PC-9 (cell line): ENCODE measurements at regions of chr2 and their contacts with region 1.

Region 1: GRCh38 chr2:98412751-98413458 is 31.8 kb upstream of the INPP4A start:
- DNase-seq: peak; percentile 50 to 69
- H3K4me3 ChIP-seq: no peak overlapping the region
- H3K27ac ChIP-seq: no peak overlapping the region
- H3K4me1 ChIP-seq: no peaks in the 10 kb centered on the region
- H3K27me3 ChIP-seq: no peaks in the 10 kb centered on the region
- CTCF ChIP-seq: peak; percentile 92

Region 2: GRCh38 chr2:98390571-98391465 is 22.1 kb before region 1 on chr2:
- CTCF ChIA-PET with region 1: no interaction called
- POLR2A ChIA-PET with region 1: no interaction called
- intact Hi-C with region 1: loop called (anchors 1 kb)
- DNase-seq: no peak
- H3K4me3 ChIP-seq: no peak overlapping the region
- H3K27ac ChIP-seq: no peak overlapping the region
- H3K4me1 ChIP-seq: no peaks in the 10 kb centered on the region
- H3K27me3 ChIP-seq: peaks cover 28% of the 10 kb centered on the region
- CTCF ChIP-seq: no peak

Region 3: GRCh38 chr2:98560256-98560771 is 147.4 kb after region 1 on chr2:
- CTCF ChIA-PET with region 1: no interaction called
- POLR2A ChIA-PET with region 1: no interaction called
- intact Hi-C with region 1: loop called (anchors 2 kb)
- DNase-seq: peak in 1 of 2 experiments; percentile 58
- H3K4me3 ChIP-seq: no peak overlapping the region
- H3K27ac ChIP-seq: no peak overlapping the region
- H3K4me1 ChIP-seq: no peaks in the 10 kb centered on the region
- H3K27me3 ChIP-seq: no peaks in the 10 kb centered on the region
- CTCF ChIP-seq: no peak

Region 4: GRCh38 chr2:98568881-98569793 is 156.2 kb after region 1 on chr2:
- CTCF ChIA-PET with region 1: no interaction called
- POLR2A ChIA-PET with region 1: no interaction called
- intact Hi-C with region 1: loop called (anchors 2 kb)
- DNase-seq: peak in 1 of 2 experiments; percentile 43
- H3K4me3 ChIP-seq: no peak overlapping the region
- H3K27ac ChIP-seq: no peak overlapping the region
- H3K4me1 ChIP-seq: no peaks in the 10 kb centered on the region
- H3K27me3 ChIP-seq: no peaks in the 10 kb centered on the region
- CTCF ChIP-seq: peak; percentile 97

Region 5: GRCh38 chr2:98601532-98602132 is 188.7 kb after region 1 on chr2:
- CTCF ChIA-PET with region 1: interaction called, 4 read pairs
- POLR2A ChIA-PET with region 1: no interaction called
- intact Hi-C with region 1: loop called (anchors 2 kb)
- DNase-seq: peak in 1 of 2 experiments; percentile 41
- H3K4me3 ChIP-seq: no peak overlapping the region
- H3K27ac ChIP-seq: no peak overlapping the region
- H3K4me1 ChIP-seq: peaks cover 19% of the 10 kb centered on the region
- H3K27me3 ChIP-seq: no peaks in the 10 kb centered on the region
- CTCF ChIP-seq: peak; percentile 89

Region 6: DNA sequence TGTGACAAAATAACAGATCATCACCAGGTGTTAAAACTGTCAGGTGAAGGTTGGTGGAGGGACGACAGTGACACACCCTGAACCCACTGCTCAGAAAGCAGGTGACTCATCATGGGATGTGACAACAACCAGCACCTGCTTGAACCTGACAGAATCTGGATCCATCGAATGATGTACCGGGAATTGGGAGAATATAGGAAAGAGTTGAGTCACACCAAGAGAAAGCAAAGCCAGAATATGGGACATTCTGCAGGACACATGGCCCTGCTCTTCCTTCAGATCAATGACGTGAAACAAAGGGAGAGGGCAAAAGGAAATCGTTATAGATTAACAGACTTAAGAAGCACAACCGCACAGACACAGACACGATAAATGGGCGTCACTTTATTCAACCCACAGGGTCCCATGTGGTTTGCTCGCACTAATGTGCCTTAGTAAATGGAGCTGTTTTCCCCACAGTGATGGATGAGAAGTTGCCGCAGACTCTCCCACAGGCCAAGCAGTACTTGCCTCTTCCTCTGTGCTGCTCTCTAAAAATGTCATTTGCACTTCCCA is 423.0 kb after region 1 on chr2:
- CTCF ChIA-PET with region 1: no interaction called
- POLR2A ChIA-PET with region 1: no interaction called
- intact Hi-C with region 1: loop called (anchors 5 kb)
- DNase-seq: no peak
- H3K4me3 ChIP-seq: no peak overlapping the region
- H3K27ac ChIP-seq: no peak overlapping the region
- H3K4me1 ChIP-seq: peaks cover 25% of the 10 kb centered on the region
- H3K27me3 ChIP-seq: no peaks in the 10 kb centered on the region
- CTCF ChIP-seq: no peak

Region 7: GRCh38 chr2:99066075-99066958 is 653.4 kb after region 1 on chr2:
- CTCF ChIA-PET with region 1: no interaction called
- POLR2A ChIA-PET with region 1: no interaction called
- intact Hi-C with region 1: loop called (anchors 2 kb)
- DNase-seq: peak; percentile 34 to 69
- H3K4me3 ChIP-seq: no peak overlapping the region
- H3K27ac ChIP-seq: no peak overlapping the region
- H3K4me1 ChIP-seq: peaks cover 4% of the 10 kb centered on the region; the same call in 1 of the 2 replicates
- H3K27me3 ChIP-seq: no peaks in the 10 kb centered on the region
- CTCF ChIP-seq: peak; percentile 81